Motor neuron (in vitro differentiated cells): ENCODE measurements at regions of chr13 and their contacts with region 1.

Region 1: DNA sequence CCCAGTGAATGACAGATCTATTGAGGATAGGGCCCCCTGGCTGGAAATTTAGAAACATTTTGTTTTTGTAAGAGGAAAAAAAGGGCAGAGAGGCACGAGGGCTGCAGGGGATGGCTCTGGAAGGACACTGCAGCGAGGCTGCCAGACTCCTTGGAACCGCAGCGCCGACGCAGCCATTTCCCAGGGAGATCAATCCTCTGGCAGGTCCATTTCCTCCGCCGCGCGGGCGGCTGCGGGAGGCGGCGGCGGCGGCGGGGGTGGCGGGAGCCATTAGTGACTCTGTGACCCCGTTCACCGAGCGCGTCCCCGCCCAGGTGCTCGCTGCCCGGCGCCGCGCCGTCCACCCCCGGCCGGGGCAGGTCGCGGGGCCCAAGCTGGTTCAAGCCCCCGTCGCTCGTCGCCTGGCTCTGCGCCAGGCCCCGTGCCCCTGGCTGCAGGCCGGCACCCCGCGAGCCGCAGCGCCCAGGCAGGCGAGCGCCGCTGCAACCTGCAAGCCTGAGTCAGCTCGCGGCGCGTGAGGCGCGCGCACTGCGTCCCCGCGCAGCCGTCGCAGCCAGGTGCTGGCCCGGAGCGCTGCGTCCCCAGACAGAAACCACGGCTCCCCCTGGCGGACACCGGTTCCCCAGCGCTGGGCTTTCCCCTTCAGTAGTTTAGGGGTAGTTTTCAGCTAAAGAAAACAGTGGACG is 192.6 kb downstream of the KATNAL1 start:
- ATAC-seq: peak; percentile 73 to 95 (median 88)
- H3K4me3 ChIP-seq: peak overlapping the region; percentile 45 to 64 (median 53)
- H3K27ac ChIP-seq: peak overlapping the region; percentile 65 to 66
- H3K4me1 ChIP-seq: peaks cover 34 to 40% of the 10 kb centered on the region in 2 donors

Region 2: GRCh38 chr13:29508130-29508875 is 606.4 kb before region 1 on chr13:
- in situ Hi-C with region 1: loop called in 7 of 9 experiments (anchors 25 kb)
- ATAC-seq: peak; percentile 80 to 90 (median 86)
- H3K4me3 ChIP-seq: no peak overlapping the region
- H3K27ac ChIP-seq: peak overlapping the region in 1 of 2 donors; percentile 68
- H3K4me1 ChIP-seq: peaks cover 25 to 29% of the 10 kb centered on the region in 2 donors

Region 3: GRCh38 chr13:29583073-29583785 is 531.5 kb before region 1 on chr13:
- in situ Hi-C with region 1: no loop called
- ATAC-seq: peak in 2 of 8 experiments; percentile 2 to 17
- H3K4me3 ChIP-seq: no peak overlapping the region
- H3K27ac ChIP-seq: no peak overlapping the region
- H3K4me1 ChIP-seq: peaks cover 2 to 13% of the 10 kb centered on the region in 2 donors

Region 4: GRCh38 chr13:29782798-29783197 is 331.9 kb before region 1 on chr13:
- in situ Hi-C with region 1: loop called in 3 of 9 experiments (anchors 10 to 25 kb)
- ATAC-seq: no peak
- H3K4me3 ChIP-seq: no peak overlapping the region
- H3K27ac ChIP-seq: no peak overlapping the region
- H3K4me1 ChIP-seq: no peaks in the 10 kb centered on the region

Region 5: DNA sequence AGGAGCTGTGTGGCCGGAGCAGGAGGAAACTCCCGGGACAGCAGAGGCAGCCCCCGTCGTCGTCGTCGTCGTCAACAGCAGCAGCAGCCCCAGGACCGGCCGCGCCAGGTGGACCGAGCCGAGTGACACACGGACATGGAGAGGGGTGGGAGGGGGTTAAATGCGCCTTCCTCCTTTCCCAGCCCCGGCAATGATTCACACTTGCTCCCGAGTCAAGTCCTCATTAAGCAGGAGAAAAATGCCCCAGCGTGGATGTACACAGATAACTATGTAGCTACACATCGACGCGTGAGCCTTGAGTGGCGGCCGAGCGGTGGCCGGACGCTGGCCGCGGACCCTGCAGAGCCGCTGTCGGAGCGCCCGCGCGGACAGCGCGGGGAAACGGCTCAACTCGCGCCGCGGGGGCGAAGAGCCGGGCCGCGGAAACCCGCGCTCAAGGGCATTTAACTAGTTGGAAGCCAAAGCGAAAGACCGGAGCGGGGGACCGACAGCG is 264.9 kb before region 1 on chr13:
- in situ Hi-C with region 1: loop called in 3 of 9 experiments (anchors 10 to 25 kb)
- ATAC-seq: peak; percentile 22 to 55 (median 46)
- H3K4me3 ChIP-seq: peak overlapping the region; percentile 57 to 97 (median 87)
- H3K27ac ChIP-seq: peak overlapping the region; percentile 94 to 97
- H3K4me1 ChIP-seq: peaks cover 0 to 12% of the 10 kb centered on the region in 2 donors